ENCODE measurements at regions of chr10 and their contacts with region 1.

Region 1: GRCh38 chr10:78211561-78212051 is 177.9 kb downstream of the RPS24 start:
- DNase-seq: peak; percentile 59
- H3K4me3 Mint-ChIP-seq: no peak overlapping the region
- H3K27ac Mint-ChIP-seq: peak overlapping the region; percentile 64
- H3K4me1 Mint-ChIP-seq: peaks cover 10% of the 10 kb centered on the region
- H3K27me3 Mint-ChIP-seq: peaks cover 34% of the 10 kb centered on the region
- CTCF ChIP-seq: peak; percentile 62

Region 2: GRCh38 chr10:78302989-78303854 is 91.6 kb after region 1 on chr10:
- CTCF ChIA-PET with region 1: interaction called, 3 read pairs
- POLR2A ChIA-PET with region 1: no interaction called
- intact Hi-C with region 1: loop called (anchors 5 kb)
- DNase-seq: peak; percentile 91
- H3K4me3 Mint-ChIP-seq: peak overlapping the region; percentile 90
- H3K27ac Mint-ChIP-seq: peak overlapping the region; percentile 75
- H3K4me1 Mint-ChIP-seq: no peaks in the 10 kb centered on the region
- H3K27me3 Mint-ChIP-seq: peaks cover 33% of the 10 kb centered on the region
- CTCF ChIP-seq: peak; percentile 43

Region 3: DNA sequence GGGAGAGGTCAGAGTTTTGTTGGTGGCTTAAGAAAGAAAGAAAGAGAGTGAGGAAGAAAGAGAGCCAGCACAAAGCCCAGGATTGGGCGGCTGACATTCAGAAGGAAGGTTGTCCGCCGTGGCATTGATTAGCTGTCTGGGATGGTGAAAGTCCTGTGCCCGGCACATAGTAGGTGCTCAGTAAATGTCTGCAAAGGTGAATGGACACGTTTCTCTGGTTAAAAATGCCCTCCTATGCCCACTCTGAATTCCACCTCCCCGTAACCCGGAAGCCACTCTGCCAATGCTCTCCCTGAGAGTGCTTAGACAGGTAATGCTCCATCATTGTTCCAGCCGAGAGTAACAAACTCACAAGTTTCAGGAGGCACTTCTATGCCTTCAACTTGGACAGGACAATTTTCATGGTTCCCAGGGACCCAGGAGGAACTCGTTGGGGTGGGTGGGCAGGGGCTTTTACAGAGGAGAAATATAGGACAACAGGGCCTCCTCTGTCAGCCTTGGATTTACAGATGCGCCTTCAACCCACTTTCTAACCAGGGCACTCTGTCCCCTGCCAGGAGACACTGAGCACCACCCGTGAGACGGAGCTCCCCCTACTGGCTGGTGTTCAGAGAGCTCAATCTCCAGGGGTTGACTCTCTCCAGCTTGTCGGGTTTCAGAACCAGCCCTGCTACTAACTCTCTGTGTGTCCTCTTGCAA is 445.7 kb after region 1 on chr10:
- CTCF ChIA-PET with region 1: no interaction called
- POLR2A ChIA-PET with region 1: no interaction called
- intact Hi-C with region 1: loop called (anchors 5 kb)
- DNase-seq: peak; percentile 76
- H3K4me3 Mint-ChIP-seq: no peak overlapping the region
- H3K27ac Mint-ChIP-seq: no peak overlapping the region
- H3K4me1 Mint-ChIP-seq: no peaks in the 10 kb centered on the region
- H3K27me3 Mint-ChIP-seq: peaks cover 41% of the 10 kb centered on the region
- CTCF ChIP-seq: peak; percentile 64